ENCODE measurements at regions of chr1 and their contacts with region 1.

Region 1: DNA sequence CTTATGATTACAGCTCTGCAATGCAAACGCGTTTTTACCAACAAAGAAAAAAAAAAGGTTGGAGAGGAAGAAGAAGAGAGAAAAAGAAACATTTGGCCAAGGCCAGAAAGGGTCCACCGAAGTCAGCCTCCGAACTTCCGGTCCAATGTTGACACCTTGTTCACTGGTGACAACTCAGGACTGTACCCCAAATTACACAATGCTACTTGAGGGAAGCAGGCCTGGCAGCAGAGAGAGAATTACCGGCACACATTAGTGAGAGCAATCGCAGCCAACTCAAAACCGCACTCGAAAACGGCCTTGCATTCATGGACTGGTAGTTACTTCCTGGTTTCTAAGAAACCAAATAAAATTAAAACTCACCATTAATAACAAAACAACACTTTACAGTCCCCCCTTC is 652.5 kb downstream of the KIF26B start:
- DNase-seq: no peak
- ATAC-seq: no peak
- H3K4me3 ChIP-seq: no peak overlapping the region
- H3K27ac ChIP-seq: no peak overlapping the region
- H3K4me1 ChIP-seq: no peaks in the 10 kb centered on the region
- H3K27me3 ChIP-seq: no peaks in the 10 kb centered on the region
- CTCF ChIP-seq: no peak
- POLR2A ChIP-seq: no peak
- RAD21 ChIP-seq: no peak

Region 2: DNA sequence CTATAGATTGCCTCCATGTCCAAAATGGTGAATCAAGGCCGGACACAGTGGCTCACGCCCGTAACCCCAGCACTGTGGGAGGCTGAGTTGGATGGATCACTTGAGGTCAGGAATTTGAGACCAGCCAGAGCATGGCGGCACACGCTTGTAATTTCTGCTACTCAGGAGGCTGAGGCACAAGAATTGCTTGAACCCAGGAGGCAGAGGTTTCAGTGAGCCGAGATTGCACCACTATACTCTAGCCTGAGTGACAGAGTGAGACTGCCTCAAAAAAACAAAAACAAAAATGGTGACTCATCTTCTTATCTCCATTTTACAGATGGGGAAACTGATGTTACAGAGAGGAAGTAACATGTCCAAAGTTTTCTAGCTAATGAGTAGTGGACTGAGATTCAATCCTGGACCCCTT is 844.0 kb before region 1 on chr1:
- CTCF ChIA-PET with region 1: no interaction called
- POLR2A ChIA-PET with region 1: no interaction called
- RAD21 ChIA-PET with region 1: no interaction called
- intact Hi-C with region 1: no loop called
- DNase-seq: no peak
- ATAC-seq: no peak
- H3K4me3 ChIP-seq: no peak overlapping the region
- H3K27ac ChIP-seq: no peak overlapping the region
- H3K4me1 ChIP-seq: peaks cover 5 to 19% of the 10 kb centered on the region in 2 experiments; a peak in 3 of 4 replicates
- H3K27me3 ChIP-seq: no peaks in the 10 kb centered on the region
- CTCF ChIP-seq: no peak
- POLR2A ChIP-seq: no peak
- RAD21 ChIP-seq: no peak

Region 3: DNA sequence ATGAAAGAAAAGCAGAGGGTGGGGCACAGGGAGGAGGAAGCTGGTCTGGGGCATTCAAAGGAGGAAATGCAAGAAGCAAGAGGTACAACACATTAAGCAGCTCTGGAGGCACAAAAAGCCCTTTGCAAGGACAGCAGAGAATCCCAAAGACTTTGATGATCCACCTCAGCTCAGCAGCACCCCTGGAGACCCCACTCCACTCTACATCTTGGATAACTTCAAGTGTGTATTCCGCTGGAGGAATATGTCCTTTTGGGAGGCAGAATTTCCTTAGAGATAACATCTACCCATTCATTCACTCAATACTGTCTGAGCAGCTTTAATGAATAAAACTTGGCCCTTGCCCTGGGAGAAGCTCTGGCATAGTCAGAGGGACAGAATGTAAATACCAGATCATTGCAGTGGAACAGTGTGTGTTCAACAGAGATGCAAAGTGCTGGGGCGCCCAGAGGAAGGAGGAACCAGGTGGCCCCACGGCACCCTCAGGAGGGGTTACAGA is 52.8 kb before region 1 on chr1:
- CTCF ChIA-PET with region 1: no interaction called
- POLR2A ChIA-PET with region 1: no interaction called
- RAD21 ChIA-PET with region 1: no interaction called
- intact Hi-C with region 1: loop called (anchors 1 kb)
- DNase-seq: no peak
- ATAC-seq: no peak
- H3K4me3 ChIP-seq: no peak overlapping the region
- H3K27ac ChIP-seq: no peak overlapping the region
- H3K4me1 ChIP-seq: no peaks in the 10 kb centered on the region
- H3K27me3 ChIP-seq: no peaks in the 10 kb centered on the region
- CTCF ChIP-seq: no peak
- POLR2A ChIP-seq: no peak
- RAD21 ChIP-seq: no peak

Region 4: GRCh38 chr1:245825128-245825901 is 18.0 kb after region 1 on chr1:
- CTCF ChIA-PET with region 1: no interaction called
- POLR2A ChIA-PET with region 1: no interaction called
- RAD21 ChIA-PET with region 1: no interaction called
- intact Hi-C with region 1: no loop called
- DNase-seq: no peak
- ATAC-seq: peak; percentile 44; the same call in 1 of the 2 replicates
- H3K4me3 ChIP-seq: no peak overlapping the region
- H3K27ac ChIP-seq: no peak overlapping the region
- H3K4me1 ChIP-seq: peaks cover 2 to 17% of the 10 kb centered on the region in 2 experiments; a peak in 3 of 4 replicates
- H3K27me3 ChIP-seq: no peaks in the 10 kb centered on the region
- CTCF ChIP-seq: 0 out of 6 replicates have a peak, but pooled peaks of 1 of the 3 experiments have one; percentile 20
- POLR2A ChIP-seq: no peak
- RAD21 ChIP-seq: 0 out of 2 replicates have a peak, but pooled peaks have one; percentile 17

Region 5: GRCh38 chr1:246043367-246043955 is 236.2 kb after region 1 on chr1:
- CTCF ChIA-PET with region 1: no interaction called
- POLR2A ChIA-PET with region 1: no interaction called
- RAD21 ChIA-PET with region 1: no interaction called
- intact Hi-C with region 1: no loop called
- DNase-seq: no peak
- ATAC-seq: no peak
- H3K4me3 ChIP-seq: no peak overlapping the region
- H3K27ac ChIP-seq: no peak overlapping the region
- H3K4me1 ChIP-seq: no peaks in the 10 kb centered on the region
- H3K27me3 ChIP-seq: no peaks in the 10 kb centered on the region
- CTCF ChIP-seq: no peak
- POLR2A ChIP-seq: no peak
- RAD21 ChIP-seq: no peak